ENCODE measurements at regions of chr20 and their contacts with region 1.

Region 1: DNA sequence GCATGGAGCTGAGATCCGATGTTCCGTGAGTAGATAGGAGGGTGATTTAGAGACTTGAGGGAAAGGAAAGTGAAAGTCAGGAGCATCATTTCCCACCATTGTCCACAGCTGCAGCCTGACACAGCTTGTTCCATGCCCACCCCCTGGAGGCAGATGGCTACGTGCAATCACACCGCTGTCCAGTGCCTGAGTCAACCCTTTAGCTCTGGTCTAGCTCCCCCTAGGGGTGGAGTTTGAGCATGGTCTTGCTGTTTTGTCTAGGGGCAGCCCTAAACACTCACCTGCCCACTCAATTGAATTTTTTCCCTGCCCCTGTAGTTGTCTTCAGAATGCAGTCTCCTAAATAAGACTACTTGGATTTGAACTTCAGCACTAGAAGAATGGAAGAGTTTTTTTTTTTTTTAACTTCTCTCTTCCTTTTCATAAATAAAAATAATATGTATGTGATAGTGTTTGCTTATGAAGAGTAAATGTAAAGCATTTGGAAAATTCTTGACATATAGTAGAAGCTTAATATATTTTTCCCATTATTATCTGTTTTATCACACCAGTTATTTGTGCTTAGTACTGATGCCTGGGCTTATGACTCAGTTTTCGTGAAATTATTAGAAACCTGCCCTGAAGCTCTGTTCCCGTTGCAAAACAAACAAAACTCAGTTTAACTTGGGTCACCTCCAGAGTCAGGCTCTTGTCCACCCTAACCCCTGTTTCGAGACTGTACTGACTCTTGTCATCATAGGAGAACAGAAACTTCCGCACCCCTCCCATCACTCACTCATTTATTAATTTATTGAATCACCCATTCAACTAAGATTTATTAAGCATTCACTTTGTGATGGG is 814.8 kb downstream of the MAFB start:
- DNase-seq: peak; percentile 87
- ATAC-seq: peak; percentile 97
- H3K4me3 Mint-ChIP-seq: no peak overlapping the region
- H3K27ac Mint-ChIP-seq: no peak overlapping the region
- H3K4me1 Mint-ChIP-seq: peaks cover 28% of the 10 kb centered on the region
- H3K27me3 Mint-ChIP-seq: no peaks in the 10 kb centered on the region
- CTCF ChIP-seq: peak; percentile 93

Region 2: DNA sequence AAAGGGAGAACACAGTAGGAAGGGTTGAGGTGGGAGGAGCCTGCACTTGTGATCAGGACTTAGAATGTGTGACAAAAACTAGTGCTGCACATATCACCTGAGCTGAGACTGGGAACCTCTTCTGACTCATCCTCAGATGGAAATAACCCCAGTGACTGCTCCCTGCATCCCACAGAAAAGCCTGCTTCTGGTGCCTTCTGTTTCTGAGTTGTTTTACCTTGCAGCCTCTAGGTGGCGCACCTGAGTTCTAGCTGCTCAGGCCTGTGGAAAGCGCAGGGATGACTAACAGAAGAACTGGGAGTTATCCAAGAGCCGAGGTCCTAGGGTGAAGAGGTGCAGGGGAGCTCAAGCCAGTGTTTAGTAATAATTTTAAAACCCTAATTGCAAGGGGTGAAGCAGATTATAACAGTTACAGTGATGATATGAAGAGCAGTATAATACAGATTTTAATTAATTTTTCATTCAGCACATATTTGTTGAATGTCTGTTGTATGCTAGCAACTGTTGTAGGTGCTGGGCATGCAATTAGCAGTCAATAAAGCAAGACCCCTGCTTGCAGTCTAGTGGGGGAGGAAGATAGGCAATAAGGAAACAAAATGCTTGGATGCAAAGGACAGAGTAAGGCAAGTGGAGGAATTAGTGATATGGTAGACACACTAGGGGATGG is 609.6 kb before region 1 on chr20:
- CTCF ChIA-PET with region 1: interaction called, 16 read pairs
- POLR2A ChIA-PET with region 1: no interaction called
- DNase-seq: peak; percentile 66
- ATAC-seq: peak; percentile 69
- H3K4me3 Mint-ChIP-seq: no peak overlapping the region
- H3K27ac Mint-ChIP-seq: no peak overlapping the region
- H3K4me1 Mint-ChIP-seq: peaks cover 5% of the 10 kb centered on the region
- H3K27me3 Mint-ChIP-seq: no peaks in the 10 kb centered on the region
- CTCF ChIP-seq: peak; percentile 91

Region 3: DNA sequence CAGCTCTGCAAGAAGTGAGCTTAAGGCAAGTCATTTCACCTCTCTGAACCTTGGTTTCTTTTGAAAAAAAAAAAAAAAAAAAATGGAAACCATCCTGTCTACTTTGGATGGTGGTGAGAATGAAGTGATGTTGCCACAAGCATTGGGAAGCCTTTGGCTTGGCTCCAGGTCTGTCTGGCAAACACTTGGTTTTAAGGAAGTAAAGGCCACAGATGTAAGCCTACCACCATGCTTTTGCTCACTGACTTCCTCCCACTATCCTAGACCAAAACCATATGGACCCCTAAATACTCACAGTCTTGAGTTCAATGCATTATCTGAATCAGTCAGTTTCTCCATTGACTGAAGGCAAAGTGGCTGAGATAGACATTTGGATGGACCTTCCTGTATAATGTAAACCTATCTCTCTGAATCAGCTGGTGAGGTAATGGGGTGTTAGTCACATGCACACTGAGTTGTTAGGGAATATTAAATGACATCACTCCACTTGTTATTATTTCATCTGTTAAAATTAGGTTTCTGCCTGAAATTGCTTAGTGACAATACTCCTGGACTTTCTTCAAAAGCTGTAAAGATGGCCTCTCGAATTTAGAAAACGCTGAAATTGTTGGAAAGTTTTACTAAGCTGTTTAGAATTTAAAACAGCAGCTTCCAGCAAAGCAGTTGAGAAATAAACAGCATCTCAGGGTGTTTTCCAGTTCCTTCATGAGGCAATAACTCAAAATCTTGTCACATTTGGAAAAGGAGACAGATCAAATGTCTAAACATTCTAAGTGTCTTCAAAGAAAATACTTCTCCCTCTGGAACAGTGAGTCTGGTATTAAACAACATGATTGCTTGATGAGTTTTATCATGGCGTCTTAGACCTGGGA is 78.6 kb before region 1 on chr20:
- CTCF ChIA-PET with region 1: no interaction called
- POLR2A ChIA-PET with region 1: no interaction called
- DNase-seq: no peak
- ATAC-seq: no peak
- H3K4me3 Mint-ChIP-seq: no peak overlapping the region
- H3K27ac Mint-ChIP-seq: no peak overlapping the region
- H3K4me1 Mint-ChIP-seq: no peaks in the 10 kb centered on the region
- H3K27me3 Mint-ChIP-seq: no peaks in the 10 kb centered on the region
- CTCF ChIP-seq: no peak

Region 4: GRCh38 chr20:39829256-39829655 is 45.0 kb before region 1 on chr20:
- CTCF ChIA-PET with region 1: interaction called, 47 read pairs
- POLR2A ChIA-PET with region 1: no interaction called
- DNase-seq: peak; percentile 48
- ATAC-seq: peak; percentile 88
- H3K4me3 Mint-ChIP-seq: no peak overlapping the region
- H3K27ac Mint-ChIP-seq: no peak overlapping the region
- H3K4me1 Mint-ChIP-seq: peaks cover 18% of the 10 kb centered on the region
- H3K27me3 Mint-ChIP-seq: no peaks in the 10 kb centered on the region
- CTCF ChIP-seq: peak; percentile 25; the same call in 1 of the 2 replicates

Region 5: DNA sequence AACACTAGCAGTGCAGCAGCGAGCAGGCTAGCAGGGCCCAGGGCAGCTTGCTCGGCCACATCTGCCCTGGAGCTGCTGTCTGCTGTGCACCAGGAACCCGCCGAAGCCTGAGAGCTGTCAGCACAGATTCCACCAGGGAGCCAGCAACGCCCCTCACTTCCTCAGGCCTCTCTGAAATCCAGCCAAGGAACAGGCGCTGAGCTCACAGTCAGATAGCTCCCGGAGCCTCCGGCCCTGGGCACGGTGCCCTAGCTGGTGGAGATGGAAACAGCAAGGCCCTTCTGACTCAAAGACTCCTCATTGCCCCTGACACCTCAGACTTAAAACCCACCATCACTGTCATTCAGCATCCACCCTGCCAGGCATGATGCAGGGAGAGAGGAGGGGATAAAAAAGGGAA is 24.6 kb before region 1 on chr20:
- CTCF ChIA-PET with region 1: interaction called, 21 read pairs
- POLR2A ChIA-PET with region 1: no interaction called
- DNase-seq: no peak
- ATAC-seq: no peak
- H3K4me3 Mint-ChIP-seq: no peak overlapping the region
- H3K27ac Mint-ChIP-seq: no peak overlapping the region
- H3K4me1 Mint-ChIP-seq: peaks cover 25% of the 10 kb centered on the region
- H3K27me3 Mint-ChIP-seq: no peaks in the 10 kb centered on the region; the same call in none of the 2 replicates
- CTCF ChIP-seq: no peak

Region 6: DNA sequence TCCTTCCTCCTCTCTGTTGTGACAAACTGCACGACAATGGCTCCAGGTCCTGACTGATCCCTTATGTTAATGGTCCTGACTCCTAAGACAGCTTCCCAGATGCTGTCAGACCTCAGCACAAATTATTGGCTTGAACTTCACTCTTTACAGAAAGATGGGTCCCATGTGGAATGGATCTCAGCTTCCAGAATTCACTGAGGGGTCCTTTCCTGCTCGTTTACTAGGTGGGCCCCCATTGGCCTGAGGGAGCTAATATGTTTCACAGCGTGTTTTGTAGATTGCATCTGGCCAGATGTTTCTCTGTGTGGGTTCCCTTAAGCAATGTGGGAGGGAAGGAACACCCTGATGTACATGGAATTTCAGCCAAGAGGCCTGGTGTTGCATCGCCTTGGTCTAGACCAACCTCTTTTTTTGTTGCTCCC is 11.8 kb before region 1 on chr20:
- CTCF ChIA-PET with region 1: interaction called, 27 read pairs
- POLR2A ChIA-PET with region 1: no interaction called
- DNase-seq: no peak
- ATAC-seq: no peak
- H3K4me3 Mint-ChIP-seq: no peak overlapping the region
- H3K27ac Mint-ChIP-seq: no peak overlapping the region
- H3K4me1 Mint-ChIP-seq: 0 out of 2 replicates have a peak, but pooled peaks cover 3% of the 10 kb centered on the region
- H3K27me3 Mint-ChIP-seq: no peaks in the 10 kb centered on the region
- CTCF ChIP-seq: no peak

Region 7: DNA sequence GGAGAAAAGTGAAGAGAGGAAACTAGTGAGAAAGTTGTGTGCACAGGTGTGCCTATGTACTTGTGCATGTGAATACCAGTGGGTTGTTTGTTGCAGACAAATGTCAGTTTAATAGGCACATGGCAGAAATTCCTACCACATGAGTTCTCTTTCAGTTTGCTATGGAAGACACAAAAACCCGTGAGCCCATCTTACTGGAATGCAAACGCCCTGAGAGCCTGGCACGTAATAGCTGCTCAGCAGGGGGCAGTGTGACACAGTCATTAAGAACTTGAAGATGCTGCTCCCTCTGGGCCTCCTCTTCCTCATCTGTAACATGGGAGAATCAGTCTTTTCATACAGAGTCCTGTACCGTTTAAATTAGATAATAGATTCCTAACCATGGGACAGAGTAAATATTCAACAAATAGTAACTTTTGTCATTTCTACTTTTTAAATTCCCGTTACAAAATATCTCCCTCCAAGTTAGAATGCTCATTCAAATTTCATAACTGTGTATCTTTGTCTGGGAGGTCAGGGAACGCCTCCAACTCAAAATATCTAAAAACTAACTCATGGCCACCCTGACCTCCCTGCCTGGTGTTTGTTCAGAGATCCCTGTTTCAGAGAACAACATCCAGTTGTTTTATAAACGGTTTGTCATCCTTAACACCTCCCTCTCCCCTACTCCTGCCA is 11.8 kb after region 1 on chr20:
- CTCF ChIA-PET with region 1: interaction called, 12 read pairs
- POLR2A ChIA-PET with region 1: no interaction called
- DNase-seq: peak; percentile 72
- ATAC-seq: peak; percentile 81
- H3K4me3 Mint-ChIP-seq: no peak overlapping the region
- H3K27ac Mint-ChIP-seq: peak overlapping the region; percentile 8; the same call in 1 of the 2 replicates
- H3K4me1 Mint-ChIP-seq: peaks cover 24% of the 10 kb centered on the region
- H3K27me3 Mint-ChIP-seq: no peaks in the 10 kb centered on the region
- CTCF ChIP-seq: 0 out of 2 replicates have a peak, but pooled peaks have one; percentile 24

Measured in WTC11 (cell line).